H1 (cell line): ENCODE measurements at regions of chr12 and their contacts with region 1.

Region 1: DNA sequence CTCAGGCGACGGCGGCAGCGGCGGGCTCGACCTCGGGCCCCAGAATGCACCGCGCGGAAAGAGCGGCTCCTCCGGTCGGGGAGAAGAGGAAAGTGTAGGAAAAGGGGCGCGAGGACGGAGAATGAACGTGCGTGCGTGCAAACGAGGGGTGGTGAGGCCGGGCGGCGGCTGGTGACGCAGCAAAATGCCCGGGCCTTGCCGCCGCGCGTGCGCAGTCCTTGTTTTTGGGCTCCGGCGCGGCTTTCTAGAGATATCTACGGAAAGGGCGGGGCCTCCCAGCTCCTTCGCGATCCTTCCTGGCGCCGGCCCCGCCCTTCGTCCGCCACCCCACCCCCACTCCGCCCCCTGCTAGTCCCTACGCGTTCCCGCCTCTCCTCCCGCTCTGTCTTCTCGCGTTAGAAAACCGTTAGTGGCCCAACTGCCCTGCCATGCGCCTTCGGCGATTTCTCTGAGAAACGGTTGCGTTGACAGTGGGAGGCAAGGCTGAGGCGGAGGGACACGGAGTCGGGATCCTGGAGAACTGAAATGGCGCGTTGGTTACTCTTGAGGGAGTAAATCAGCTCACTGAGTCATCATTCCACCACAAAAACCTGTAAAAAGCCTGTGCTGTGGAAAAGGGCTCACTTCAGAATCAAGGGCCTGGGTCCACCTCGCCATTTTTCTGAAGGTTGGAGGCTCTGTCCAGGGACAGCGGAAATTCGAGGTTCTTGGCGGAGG is at the start of gene PTGES3:
- DNase-seq: peak; percentile 94 to 97
- H3K4me3 ChIP-seq: peak within 1 kb of the TSS; percentile 81 to 98 (median 94)
- H3K27ac ChIP-seq: peak within 1 kb of the TSS; percentile 92
- H3K4me1 ChIP-seq: no peaks in the 10 kb centered on the region; a peak in 2 of 7 replicates
- H3K27me3 ChIP-seq: no peaks in the 10 kb centered on the region
- CTCF ChIP-seq: no peak
- EP300 ChIP-seq: peak in 1 of 2 experiments; percentile 5; a peak in 1 of 3 replicates
- POLR2A ChIP-seq: peak; percentile 91
- RAD21 ChIP-seq: no peak
- total RNA-seq, gene PTGES3: 453 and 464 TPM in 2 replicates

Region 2: DNA sequence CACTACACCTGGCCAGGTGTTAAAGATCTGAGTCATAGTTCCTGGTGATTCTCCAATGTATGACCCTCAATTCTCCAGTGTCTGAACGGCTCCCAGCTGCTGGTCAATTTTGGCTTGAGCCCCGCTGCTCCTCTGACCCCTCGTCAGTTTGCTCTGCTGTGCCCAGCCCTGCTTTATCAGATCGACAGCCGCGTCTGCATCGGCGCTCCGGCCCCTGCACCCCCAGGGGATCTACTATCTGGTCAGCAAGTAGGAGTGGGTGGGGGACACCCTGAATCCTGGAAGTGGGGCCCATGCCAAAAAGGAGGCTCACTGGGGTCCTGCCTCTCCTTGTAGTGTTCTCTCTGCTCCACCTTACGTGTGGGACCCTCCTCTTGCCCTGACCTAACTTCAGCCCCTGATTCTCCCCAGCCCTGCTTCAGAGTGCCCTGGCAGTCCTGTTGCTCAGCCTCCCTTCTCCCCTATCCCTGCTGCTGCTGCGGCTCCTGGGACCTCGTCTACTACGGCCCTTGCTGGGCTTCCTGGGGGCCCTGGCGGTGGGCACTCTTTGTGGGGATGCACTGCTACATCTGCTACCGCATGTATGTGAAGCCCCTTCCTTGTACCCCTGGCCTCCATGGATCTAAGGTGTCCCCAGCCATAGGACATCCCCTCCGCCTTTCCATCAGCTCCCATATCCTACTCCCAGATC is 453.4 kb before region 1 on chr12:
- CTCF ChIA-PET with region 1: no interaction called
- POLR2A ChIA-PET with region 1: no interaction called
- DNase-seq: no peak
- H3K4me3 ChIP-seq: no peak overlapping the region
- H3K27ac ChIP-seq: no peak overlapping the region
- H3K4me1 ChIP-seq: peaks cover 0 to 10% (median 2%) of the 10 kb centered on the region in 4 experiments; a peak in 4 of 7 replicates
- H3K27me3 ChIP-seq: 0 out of 7 replicates have a peak, but pooled peaks cover 0 to 2% (median 0%) of the 10 kb centered on the region in 4 experiments
- CTCF ChIP-seq: no peak
- EP300 ChIP-seq: no peak
- POLR2A ChIP-seq: no peak
- RAD21 ChIP-seq: no peak

Region 3: GRCh38 chr12:56521590-56522371 is 166.5 kb before region 1 on chr12 and contains the start of gene RBMS2:
- CTCF ChIA-PET with region 1: no interaction called
- POLR2A ChIA-PET with region 1: no interaction called
- DNase-seq: peak in 1 of 2 experiments; percentile 73
- H3K4me3 ChIP-seq: peak within 1 kb of the TSS; percentile 53 to 84 (median 65)
- H3K27ac ChIP-seq: no peak within 1 kb of the TSS
- H3K4me1 ChIP-seq: peaks cover under 1 to 2% (median 2%) of the 10 kb centered on the region in 4 experiments; a peak in 5 of 7 replicates
- H3K27me3 ChIP-seq: no peaks in the 10 kb centered on the region
- CTCF ChIP-seq: no peak
- EP300 ChIP-seq: no peak; a peak in 1 of 3 replicates
- POLR2A ChIP-seq: no peak
- RAD21 ChIP-seq: no peak
- total RNA-seq, gene RBMS2: 25.5 and 31.3 TPM in 2 replicates

Region 4: DNA sequence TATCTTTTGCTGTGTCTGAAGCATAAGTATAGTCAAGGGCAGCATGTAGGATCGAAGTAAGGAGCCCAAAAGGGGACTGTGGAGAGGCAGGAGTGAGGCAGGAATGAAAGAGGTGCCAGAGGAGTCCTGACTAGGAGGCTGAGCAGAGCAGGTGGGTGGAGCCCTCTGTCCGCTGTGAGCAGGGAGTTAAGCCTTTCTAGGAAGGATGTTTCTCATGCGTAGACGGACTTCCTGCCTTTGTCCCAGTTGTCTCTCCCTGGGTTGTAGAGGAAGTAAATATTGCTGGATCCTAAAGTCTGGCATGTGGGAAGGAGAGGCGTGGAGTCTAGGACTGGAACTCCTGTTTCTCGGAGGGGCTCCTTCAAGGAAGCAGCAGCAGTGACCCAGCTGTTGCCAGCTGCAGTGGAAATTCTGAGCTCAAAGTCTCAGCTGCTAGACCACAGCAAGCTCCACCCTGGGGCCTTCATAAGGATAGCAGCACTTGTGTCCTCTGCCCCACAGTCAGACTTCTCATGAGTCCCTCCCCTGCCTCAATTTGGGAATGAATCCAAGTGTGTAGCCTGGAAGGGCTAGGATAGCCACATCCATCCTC is 122.7 kb before region 1 on chr12:
- CTCF ChIA-PET with region 1: no interaction called
- POLR2A ChIA-PET with region 1: no interaction called
- DNase-seq: peak in 1 of 2 experiments; percentile 53
- H3K4me3 ChIP-seq: no peak overlapping the region
- H3K27ac ChIP-seq: no peak overlapping the region
- H3K4me1 ChIP-seq: peaks cover 0 to 4% (median 2%) of the 10 kb centered on the region in 4 experiments; a peak in 4 of 7 replicates
- H3K27me3 ChIP-seq: no peaks in the 10 kb centered on the region
- CTCF ChIP-seq: no peak
- EP300 ChIP-seq: no peak
- POLR2A ChIP-seq: no peak
- RAD21 ChIP-seq: no peak

Region 5: GRCh38 chr12:56636675-56637540 is 51.4 kb before region 1 on chr12:
- CTCF ChIA-PET with region 1: interaction called, 10 read pairs
- POLR2A ChIA-PET with region 1: interaction called, 40 read pairs
- DNase-seq: peak; percentile 92 to 95
- H3K4me3 ChIP-seq: peak overlapping the region; percentile 86 to 90 (median 88); a peak in 7 of 8 replicates
- H3K27ac ChIP-seq: peak overlapping the region; percentile 27; the same call in 1 of the 2 replicates
- H3K4me1 ChIP-seq: peaks cover 8 to 36% (median 24%) of the 10 kb centered on the region in 4 experiments
- H3K27me3 ChIP-seq: no peaks in the 10 kb centered on the region
- CTCF ChIP-seq: peak; percentile 67 to 70 (median 68)
- EP300 ChIP-seq: peak in 1 of 2 experiments; percentile 72; a peak in 1 of 3 replicates
- POLR2A ChIP-seq: peak in 1 of 2 experiments; percentile 35; a peak in 1 of 3 replicates
- RAD21 ChIP-seq: peak; percentile 68 to 73

Region 6: DNA sequence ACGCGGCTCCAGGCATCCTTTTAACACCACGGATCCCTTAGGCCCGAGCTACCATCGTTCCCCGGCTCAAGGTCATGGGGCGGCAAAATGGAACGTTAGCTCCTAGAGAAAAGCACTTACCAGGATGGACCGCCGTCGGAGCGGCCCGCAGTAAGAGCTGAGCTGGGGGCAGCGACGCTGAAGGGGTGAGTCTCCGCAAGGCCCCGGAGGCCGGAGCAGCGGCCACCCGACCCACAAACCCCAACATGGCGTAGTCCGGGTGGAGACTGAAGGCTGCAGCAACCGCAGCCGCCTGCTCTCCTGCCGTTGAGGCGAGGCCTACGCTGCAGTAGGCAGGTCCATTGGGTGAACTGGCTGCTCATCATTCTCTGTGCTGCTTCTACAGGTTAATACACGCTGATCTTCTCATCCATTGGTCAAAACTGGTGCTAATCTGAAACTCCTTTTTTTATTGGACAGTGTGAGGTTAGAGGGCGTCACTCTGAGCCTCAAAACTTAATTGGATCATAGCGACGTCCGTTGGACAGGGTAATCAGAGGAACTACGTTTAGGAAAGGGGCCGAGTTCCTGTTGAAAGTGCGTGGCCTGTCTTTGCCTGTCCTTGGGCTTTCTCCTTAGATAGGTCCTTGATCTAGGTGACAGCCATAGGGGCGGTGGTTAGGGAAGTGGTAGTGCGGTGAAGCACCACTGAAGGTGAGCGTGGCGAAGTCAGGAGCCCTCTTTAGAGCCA is 42.4 kb before region 1 on chr12 and contains the start of gene ATP5F1B:
- CTCF ChIA-PET with region 1: interaction called, 4 read pairs
- POLR2A ChIA-PET with region 1: interaction called, 62 read pairs
- DNase-seq: peak; percentile 88 to 96
- H3K4me3 ChIP-seq: peak within 1 kb of the TSS; percentile 90 to 99 (median 97)
- H3K27ac ChIP-seq: peak within 1 kb of the TSS; percentile 95
- H3K4me1 ChIP-seq: no peaks in the 10 kb centered on the region
- H3K27me3 ChIP-seq: no peaks in the 10 kb centered on the region
- CTCF ChIP-seq: no peak
- EP300 ChIP-seq: no peak
- POLR2A ChIP-seq: peak; percentile 98 to 99
- RAD21 ChIP-seq: no peak
- total RNA-seq, gene ATP5F1B: 900 and 930 TPM in 2 replicates

Region 7: DNA sequence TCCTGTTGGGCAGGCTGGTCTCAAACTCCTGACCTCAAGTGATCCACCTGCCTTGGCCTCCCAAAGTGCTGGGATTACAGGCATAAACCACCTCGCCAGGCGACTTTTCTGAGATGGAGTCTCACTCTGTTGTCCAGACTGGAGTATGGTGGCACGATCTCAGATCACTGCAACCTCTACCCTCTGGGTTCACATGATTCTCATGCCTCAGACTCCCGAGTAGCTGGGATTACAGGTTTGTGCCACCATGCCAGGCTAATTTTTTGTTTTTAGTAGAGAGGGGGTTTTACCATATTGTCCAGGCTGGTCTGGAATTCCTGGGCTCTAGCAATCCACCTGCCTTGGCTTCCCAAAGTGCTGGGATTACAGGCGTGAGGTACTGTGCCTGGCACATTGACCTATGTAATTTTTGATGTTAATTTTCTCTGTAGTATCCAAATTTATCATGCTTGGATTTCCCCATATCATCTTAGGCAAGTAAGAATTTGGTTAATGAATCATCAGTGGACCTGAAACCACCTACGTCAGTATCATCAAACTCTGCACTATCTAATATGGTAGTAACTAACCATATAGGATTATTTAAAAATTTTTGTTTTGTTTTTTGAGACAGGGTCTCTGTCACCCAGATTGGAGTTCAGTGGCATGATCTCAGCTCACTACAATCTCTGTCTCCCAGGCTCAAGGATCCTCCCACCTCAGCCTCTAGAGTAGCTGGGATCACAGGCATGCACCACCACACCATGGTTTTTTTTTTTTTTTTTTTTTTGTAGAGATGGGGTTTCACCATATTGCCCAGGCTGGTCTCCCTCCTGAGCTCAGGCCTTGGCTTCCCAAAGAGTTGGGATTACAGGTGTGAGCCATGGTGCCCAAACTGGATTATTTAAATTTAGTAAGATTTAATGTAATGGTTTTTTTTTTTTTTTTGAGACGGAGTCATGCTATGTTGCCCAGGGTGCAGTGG is 30.6 kb before region 1 on chr12:
- CTCF ChIA-PET with region 1: no interaction called
- POLR2A ChIA-PET with region 1: interaction called, 46 read pairs
- DNase-seq: no peak
- H3K4me3 ChIP-seq: no peak overlapping the region
- H3K27ac ChIP-seq: no peak overlapping the region
- H3K4me1 ChIP-seq: no peaks in the 10 kb centered on the region
- H3K27me3 ChIP-seq: no peaks in the 10 kb centered on the region
- CTCF ChIP-seq: no peak
- EP300 ChIP-seq: no peak
- POLR2A ChIP-seq: no peak
- RAD21 ChIP-seq: no peak

Region 8: GRCh38 chr12:56670836-56671235 is 17.5 kb before region 1 on chr12:
- CTCF ChIA-PET with region 1: interaction called, 7 read pairs
- POLR2A ChIA-PET with region 1: interaction called, 71 read pairs
- DNase-seq: no peak
- H3K4me3 ChIP-seq: no peak overlapping the region
- H3K27ac ChIP-seq: no peak overlapping the region
- H3K4me1 ChIP-seq: no peaks in the 10 kb centered on the region
- H3K27me3 ChIP-seq: 0 out of 7 replicates have a peak, but pooled peaks cover 0 to 2% (median 0%) of the 10 kb centered on the region in 4 experiments
- CTCF ChIP-seq: no peak
- EP300 ChIP-seq: no peak
- POLR2A ChIP-seq: no peak
- RAD21 ChIP-seq: no peak

Region 9: GRCh38 chr12:56677680-56678079 is 10.6 kb before region 1 on chr12:
- CTCF ChIA-PET with region 1: interaction called, 7 read pairs
- POLR2A ChIA-PET with region 1: interaction called, 71 read pairs
- DNase-seq: no peak
- H3K4me3 ChIP-seq: no peak overlapping the region
- H3K27ac ChIP-seq: no peak overlapping the region
- H3K4me1 ChIP-seq: peaks cover 0 to 3% (median 0%) of the 10 kb centered on the region in 4 experiments; a peak in 2 of 7 replicates
- H3K27me3 ChIP-seq: no peaks in the 10 kb centered on the region
- CTCF ChIP-seq: no peak
- EP300 ChIP-seq: no peak
- POLR2A ChIP-seq: no peak
- RAD21 ChIP-seq: no peak

Region 10: GRCh38 chr12:57118711-57119271 is 430.5 kb after region 1 on chr12:
- CTCF ChIA-PET with region 1: no interaction called
- POLR2A ChIA-PET with region 1: no interaction called
- DNase-seq: no peak
- H3K4me3 ChIP-seq: no peak overlapping the region
- H3K27ac ChIP-seq: no peak overlapping the region
- H3K4me1 ChIP-seq: no peaks in the 10 kb centered on the region
- H3K27me3 ChIP-seq: peaks cover 0 to 2% (median under 1%) of the 10 kb centered on the region in 4 experiments; a peak in 1 of 7 replicates
- CTCF ChIP-seq: no peak
- EP300 ChIP-seq: no peak
- POLR2A ChIP-seq: no peak
- RAD21 ChIP-seq: no peak